ENCODE measurements at regions of chr13 and their contacts with region 1.

Region 1: DNA sequence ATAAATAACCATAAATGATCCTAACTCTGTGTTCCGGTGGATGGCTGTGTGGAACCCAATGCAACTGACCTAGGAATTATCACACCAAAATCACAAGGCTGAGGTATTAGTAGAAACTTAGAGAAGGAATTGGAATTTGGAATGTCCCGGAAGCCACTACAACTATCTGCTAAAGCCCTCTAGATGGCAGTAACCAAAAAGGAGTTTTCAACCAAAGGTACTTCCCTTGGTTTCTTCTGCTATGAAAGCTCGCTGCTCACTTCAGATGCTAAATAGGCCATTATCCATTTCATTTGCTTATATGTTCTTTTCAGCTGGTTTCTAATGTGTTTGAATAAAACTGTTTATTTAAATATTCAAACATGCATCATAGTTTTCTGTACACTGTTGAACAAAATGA is 1589.1 kb upstream of the SPRY2 start:
- DNase-seq: peak; percentile 3
- H3K4me3 ChIP-seq: no peak overlapping the region
- H3K27ac ChIP-seq: no peak overlapping the region
- H3K4me1 ChIP-seq: no peaks in the 10 kb centered on the region
- H3K27me3 ChIP-seq: no peaks in the 10 kb centered on the region
- CTCF ChIP-seq: peak; percentile 36 to 55

Region 2: DNA sequence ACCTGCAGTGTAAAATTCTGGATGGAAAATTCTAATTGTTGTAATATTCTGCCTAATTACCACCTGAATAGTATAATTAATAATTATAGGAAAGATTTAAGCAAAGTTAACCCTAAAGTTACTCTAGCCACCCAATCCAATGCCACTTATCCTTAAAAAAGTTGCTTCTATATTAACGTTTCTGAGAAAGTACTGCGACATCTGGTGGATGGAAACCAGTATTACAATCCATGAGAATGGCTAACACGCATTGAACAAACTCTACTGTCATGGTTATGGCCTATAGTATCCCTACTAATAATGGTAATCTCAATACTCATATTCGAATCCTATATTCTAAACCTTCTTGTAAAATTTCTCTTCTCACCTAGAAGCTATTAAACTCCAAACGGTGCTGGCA is 400.5 kb after region 1 on chr13:
- CTCF ChIA-PET with region 1: no interaction called
- dilution Hi-C with region 1: no loop called
- in situ Hi-C with region 1: no loop called
- intact Hi-C with region 1: loop called (anchors 1 kb)
- DNase-seq: peak; percentile 15
- H3K4me3 ChIP-seq: no peak overlapping the region
- H3K27ac ChIP-seq: no peak overlapping the region
- H3K4me1 ChIP-seq: no peaks in the 10 kb centered on the region
- H3K27me3 ChIP-seq: no peaks in the 10 kb centered on the region
- CTCF ChIP-seq: peak; percentile 62 to 63

Measured in mammary epithelial cell (primary cell).